Right cardiac atrium (tissue), 5 donors: ENCODE measurements at regions of chr3 and their contacts with region 1.

Region 1: GRCh38 chr3:183210839-183211341 is 42.2 kb upstream of the B3GNT5 start:
- DNase-seq: peak in 1 of 3 donors; percentile 20
- ATAC-seq: peak; percentile 41 to 57
- H3K4me3 ChIP-seq: no peak overlapping the region
- H3K27ac ChIP-seq: no peak overlapping the region
- H3K4me1 ChIP-seq: peaks cover 3% of the 10 kb centered on the region
- H3K27me3 ChIP-seq: no peaks in the 10 kb centered on the region

Region 2: DNA sequence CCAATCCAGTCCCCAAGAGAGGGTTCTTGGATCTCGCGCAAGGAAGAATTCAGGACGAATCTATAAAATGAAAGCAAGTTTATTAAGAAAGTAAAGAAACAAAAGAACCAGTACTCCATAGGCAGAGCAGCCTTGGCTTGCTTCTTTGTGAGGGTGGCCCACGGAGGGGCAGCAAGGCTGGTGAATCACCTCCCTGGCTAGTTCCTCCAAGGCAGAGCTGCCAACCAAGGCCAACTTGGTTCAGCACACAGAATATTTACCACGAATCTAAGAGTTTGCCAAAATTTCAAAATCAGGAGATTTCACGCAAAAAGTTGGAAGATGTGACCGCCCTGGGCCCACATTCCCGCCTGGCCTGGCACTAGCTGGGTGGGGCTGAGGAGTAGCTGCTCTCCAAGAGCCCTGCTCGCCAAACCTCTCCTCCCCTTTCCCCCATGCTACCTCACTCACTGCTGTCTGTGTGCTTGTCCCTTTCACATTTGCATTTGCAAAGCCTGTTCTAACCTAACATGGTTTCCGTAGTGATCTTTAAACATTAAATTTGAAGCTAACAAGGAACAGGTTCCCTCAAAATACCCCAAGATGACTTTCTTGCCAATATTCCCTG is 204.4 kb before region 1 on chr3:
- intact Hi-C with region 1: no loop called
- DNase-seq: no peak
- ATAC-seq: no peak
- H3K4me3 ChIP-seq: no peak overlapping the region
- H3K27ac ChIP-seq: no peak overlapping the region
- H3K4me1 ChIP-seq: no peaks in the 10 kb centered on the region
- H3K27me3 ChIP-seq: no peaks in the 10 kb centered on the region

Region 3: DNA sequence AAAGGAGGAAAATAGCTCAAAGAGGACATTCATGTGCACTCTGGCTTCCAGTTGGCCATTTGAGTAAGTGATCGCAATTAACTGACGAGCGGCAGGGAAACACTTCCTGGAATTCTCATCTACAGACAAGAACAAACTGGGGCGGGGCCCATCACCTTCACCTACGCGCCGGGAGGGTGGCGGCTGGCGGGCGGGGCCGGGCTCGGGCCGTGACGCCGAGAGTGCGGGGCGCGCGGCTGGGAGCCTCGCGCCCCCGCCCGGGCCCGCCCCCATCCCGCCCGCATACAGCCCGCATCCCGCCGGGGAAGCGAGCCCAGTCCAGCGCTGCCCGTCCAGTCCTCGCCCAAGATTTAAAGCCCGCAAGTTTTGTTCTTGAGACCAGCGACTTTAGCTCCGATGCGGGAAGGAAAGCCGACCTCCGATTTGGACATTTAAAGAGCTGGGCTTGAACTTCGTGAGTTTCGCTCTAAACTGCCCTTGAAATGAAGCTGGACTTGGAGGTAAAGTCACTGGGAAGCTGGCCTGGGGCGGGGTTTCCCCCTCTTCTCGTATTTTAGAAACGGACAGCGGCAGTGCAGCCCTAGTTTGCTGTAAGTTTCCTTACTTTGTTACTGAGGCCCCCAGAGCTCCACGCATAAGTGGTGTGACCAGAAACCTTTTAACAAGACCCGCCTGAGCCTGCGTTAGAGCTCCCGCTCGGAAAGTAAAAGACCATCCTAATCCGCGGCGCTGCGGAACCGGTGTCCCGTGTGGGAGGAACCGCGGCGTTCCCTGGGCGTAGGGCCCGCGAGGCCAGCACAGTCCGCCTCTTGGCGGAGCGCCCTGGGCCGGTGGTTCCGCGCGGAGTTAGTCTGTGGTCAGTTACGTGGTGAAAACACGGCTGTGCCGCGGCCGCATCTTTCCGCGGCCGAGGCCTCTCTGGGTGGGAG is 42.3 kb after region 1 on chr3 and contains the start of gene B3GNT5:
- intact Hi-C with region 1: loop called in 1 of 4 experiments (anchors 2 kb)
- DNase-seq: peak; percentile 81 to 93 (median 91)
- ATAC-seq: peak; percentile 90 to 93
- H3K4me3 ChIP-seq: peak within 1 kb of the TSS; percentile 97
- H3K27ac ChIP-seq: peak within 1 kb of the TSS; percentile 81
- H3K4me1 ChIP-seq: no peaks in the 10 kb centered on the region
- H3K27me3 ChIP-seq: no peaks in the 10 kb centered on the region
- total RNA-seq, gene B3GNT5: 2.2 to 4.3 (median 2.7) TPM